ENCODE measurements at regions of chr12 and their contacts with region 1.

Region 1: GRCh38 chr12:116015525-116015924 is 262.0 kb downstream of the MED13L start:
- DNase-seq: no peak
- H3K4me3 ChIP-seq: no peak overlapping the region
- H3K27ac ChIP-seq: no peak overlapping the region
- H3K4me1 ChIP-seq: peaks cover 0 to 12% (median 0%) of the 10 kb centered on the region in 6 donors
- H3K27me3 ChIP-seq: no peaks in the 10 kb centered on the region
- CTCF ChIP-seq: peak in 7 of 11 experiments; percentile 40 to 56 (median 48)
- POLR2A ChIP-seq: no peak

Region 2: DNA sequence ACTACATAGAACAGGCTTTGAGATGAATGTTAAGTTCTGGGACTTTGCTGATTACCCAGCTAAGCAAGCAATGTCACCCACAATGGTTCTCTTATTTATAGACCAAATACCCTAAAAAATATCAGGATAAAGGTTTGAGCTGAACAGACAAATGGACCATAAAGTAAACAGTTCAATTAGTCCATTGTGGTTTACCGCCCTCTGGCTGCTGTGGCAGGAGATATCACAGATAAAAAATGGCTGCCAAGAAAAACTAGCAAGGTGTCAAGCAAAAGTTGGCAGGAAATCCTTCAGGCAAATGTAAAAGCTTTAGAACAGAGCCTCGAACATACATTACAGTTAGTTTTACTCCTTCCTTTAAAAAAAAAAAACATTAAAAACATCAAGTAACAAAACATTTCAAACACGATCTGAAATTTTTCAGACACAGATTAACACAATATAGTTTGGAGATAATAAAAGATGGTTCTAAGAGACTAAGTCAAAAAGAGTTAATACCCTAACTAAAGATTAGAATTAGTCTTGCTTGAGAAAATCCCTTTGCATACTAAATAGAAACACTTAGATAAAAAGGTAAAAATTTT is 220.7 kb after region 1 on chr12:
- intact Hi-C with region 1: loop called (anchors 10 kb)
- DNase-seq: no peak
- H3K4me3 ChIP-seq: no peak overlapping the region
- H3K27ac ChIP-seq: peak overlapping the region in 4 of 8 donors; percentile 5 to 51 (median 22)
- H3K4me1 ChIP-seq: peaks cover 0 to 88% (median 46%) of the 10 kb centered on the region in 6 donors
- H3K27me3 ChIP-seq: no peaks in the 10 kb centered on the region
- CTCF ChIP-seq: peak; percentile 35 to 74 (median 68)
- POLR2A ChIP-seq: no peak